A549 (cell line): ENCODE measurements at regions of chr19 and their contacts with region 1.

Region 1: DNA sequence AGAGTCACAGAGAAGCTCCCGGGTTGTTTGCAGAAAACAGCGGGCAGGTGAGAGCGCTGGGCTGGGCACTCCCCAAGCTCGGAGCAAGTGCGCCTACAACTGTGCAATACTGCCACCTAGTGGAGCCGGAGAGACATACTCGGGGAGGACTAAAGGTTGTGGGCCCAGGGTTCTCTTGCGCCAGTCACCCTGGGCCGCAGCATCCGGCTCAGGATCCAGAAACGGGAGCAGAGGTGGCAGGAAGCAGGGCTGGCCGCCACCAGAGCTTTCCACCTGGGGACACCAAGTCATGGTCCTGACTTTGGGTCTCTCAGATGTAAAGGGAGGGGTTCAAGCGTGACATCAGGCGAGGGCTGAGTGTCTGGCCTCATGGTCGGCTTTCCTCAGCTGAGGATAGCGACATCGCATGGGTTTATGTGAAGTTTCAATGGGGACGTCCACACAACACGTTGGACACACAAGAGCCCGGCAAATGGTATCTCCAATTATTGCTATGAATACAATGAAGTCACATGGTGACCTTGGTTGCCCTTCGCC is 11.2 kb upstream of the KLK4 start:
- DNase-seq: peak; percentile 89 to 91
- ATAC-seq: peak; percentile 97 to 100
- H3K4me3 ChIP-seq: no peak overlapping the region
- H3K27ac ChIP-seq: no peak overlapping the region
- H3K4me1 ChIP-seq: peaks cover 14% of the 10 kb centered on the region; the same call in 1 of the 3 replicates
- CTCF ChIP-seq: peak; percentile 96
- EP300 ChIP-seq: no peak
- POLR2A ChIP-seq: no peak
- RAD21 ChIP-seq: peak; percentile 95 to 97

Region 2: DNA sequence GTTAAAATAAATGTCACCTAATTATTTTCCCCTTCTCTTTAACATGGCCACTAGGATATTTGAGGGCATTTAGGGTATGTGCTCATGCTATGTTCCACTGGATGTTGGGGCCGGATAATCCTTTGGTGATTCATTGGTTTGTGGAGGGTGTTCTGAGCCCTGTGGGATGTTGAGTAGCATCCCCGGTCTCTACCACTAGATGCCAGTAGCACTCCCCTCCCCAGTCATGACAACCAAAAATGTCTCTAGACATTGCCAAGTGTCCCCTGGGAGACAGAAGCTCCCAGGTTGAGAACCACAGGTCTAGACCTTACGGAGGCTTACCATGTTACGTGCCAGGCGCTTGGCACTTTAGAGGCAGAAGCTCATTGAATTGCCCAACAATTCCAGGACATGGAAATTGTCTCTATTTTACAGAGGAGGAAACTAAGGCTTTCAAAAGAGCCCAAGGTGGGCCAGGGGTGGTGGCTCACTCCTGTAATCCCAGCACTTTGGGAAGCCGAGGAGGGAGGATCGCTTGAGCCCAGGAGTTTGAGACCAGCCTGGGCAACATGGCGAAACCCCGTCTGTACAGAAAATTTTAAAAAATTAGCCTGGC is 216.9 kb before region 1 on chr19:
- CTCF ChIA-PET with region 1: interaction called, 26 read pairs
- POLR2A ChIA-PET with region 1: no interaction called
- DNase-seq: peak; percentile 79 to 95
- ATAC-seq: peak; percentile 84 to 88
- H3K4me3 ChIP-seq: no peak overlapping the region
- H3K27ac ChIP-seq: no peak overlapping the region
- H3K4me1 ChIP-seq: peaks cover 13% of the 10 kb centered on the region; the same call in 1 of the 3 replicates
- CTCF ChIP-seq: peak; percentile 80
- EP300 ChIP-seq: no peak
- POLR2A ChIP-seq: no peak
- RAD21 ChIP-seq: peak; percentile 73 to 76

Region 3: DNA sequence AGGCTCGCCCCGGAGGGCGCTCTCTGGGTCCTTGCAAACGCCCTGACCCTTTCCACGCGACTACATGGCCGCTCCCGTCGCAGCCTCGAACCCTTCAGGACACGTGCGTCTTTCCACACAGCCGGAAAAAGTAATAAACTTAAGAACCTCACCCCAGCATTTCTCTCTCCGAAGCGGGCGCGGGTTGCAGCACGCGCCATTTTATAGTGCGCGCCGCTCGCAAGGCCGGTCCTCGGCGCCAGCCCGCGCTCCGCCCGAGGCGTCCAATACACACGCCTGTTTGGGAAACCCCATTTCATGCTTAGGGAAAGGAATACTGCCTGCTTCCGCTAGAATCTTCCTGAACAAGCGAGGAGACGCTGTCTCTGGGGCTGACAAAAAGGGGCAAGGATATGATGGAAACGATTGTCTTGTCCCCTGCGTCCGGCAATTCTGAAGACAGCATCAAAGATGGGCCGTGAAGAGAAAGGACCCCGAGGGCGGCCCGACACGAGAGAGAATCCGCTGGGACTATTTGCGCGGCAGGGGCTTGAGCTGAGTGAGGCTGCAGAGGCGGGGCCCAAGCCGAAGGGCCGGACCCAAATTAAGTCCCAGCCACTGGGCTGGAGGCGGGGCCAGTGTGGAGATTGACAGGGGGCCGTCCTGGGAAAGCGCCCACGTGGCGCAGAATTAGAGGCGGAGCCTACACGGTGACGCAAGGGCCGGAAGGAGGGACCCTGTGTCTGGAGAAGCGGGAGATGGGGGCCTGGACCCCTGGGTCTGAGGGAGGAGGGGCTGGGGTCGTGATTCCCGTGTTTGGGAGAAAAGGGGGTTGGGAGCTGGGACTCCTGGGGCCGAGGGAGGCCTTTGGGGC is 117.7 kb before region 1 on chr19:
- CTCF ChIA-PET with region 1: interaction called, 20 read pairs
- POLR2A ChIA-PET with region 1: interaction called, 14 read pairs
- DNase-seq: peak; percentile 98 to 100
- ATAC-seq: peak; percentile 89 to 95
- H3K4me3 ChIP-seq: peak overlapping the region; percentile 65
- H3K27ac ChIP-seq: peak overlapping the region; percentile 94 to 95
- H3K4me1 ChIP-seq: peaks cover 15% of the 10 kb centered on the region
- CTCF ChIP-seq: no peak
- EP300 ChIP-seq: no peak
- POLR2A ChIP-seq: peak; percentile 97
- RAD21 ChIP-seq: no peak

Region 4: DNA sequence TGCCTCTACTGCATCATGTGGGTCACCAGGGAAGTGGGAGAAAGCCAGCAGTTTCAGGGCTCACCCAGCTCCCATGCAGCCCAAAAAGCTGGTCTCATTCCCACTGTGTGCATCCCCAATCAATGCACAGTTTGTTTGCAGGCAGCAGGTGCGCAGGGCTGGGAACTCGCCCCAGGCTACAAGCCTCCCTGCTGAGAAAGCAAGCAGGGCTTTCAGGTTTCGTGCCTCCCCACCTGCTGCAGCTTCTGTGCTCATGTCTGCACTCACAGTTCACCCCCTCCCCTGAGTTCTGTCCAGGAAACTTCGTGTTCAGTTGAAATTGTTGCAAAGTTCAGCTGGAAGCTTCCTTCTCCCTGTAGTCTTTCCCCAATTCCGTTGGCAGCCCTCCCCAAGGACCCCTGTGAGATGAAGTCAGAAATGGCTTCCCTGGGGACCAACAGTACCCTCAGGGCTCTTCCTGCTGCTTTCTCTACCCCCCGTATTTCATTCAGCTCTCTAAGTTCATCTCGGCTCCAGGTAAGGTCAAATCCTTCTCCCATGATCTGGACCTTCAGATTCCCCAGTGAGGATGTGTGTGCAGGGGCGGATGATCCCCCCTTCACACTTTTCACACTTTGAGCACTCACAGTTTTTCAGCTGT is 78.0 kb before region 1 on chr19:
- CTCF ChIA-PET with region 1: interaction called, 39 read pairs
- POLR2A ChIA-PET with region 1: no interaction called
- DNase-seq: no peak
- ATAC-seq: no peak
- H3K4me3 ChIP-seq: no peak overlapping the region
- H3K27ac ChIP-seq: no peak overlapping the region
- H3K4me1 ChIP-seq: no peaks in the 10 kb centered on the region
- CTCF ChIP-seq: no peak
- EP300 ChIP-seq: no peak
- POLR2A ChIP-seq: no peak
- RAD21 ChIP-seq: no peak

Region 5: DNA sequence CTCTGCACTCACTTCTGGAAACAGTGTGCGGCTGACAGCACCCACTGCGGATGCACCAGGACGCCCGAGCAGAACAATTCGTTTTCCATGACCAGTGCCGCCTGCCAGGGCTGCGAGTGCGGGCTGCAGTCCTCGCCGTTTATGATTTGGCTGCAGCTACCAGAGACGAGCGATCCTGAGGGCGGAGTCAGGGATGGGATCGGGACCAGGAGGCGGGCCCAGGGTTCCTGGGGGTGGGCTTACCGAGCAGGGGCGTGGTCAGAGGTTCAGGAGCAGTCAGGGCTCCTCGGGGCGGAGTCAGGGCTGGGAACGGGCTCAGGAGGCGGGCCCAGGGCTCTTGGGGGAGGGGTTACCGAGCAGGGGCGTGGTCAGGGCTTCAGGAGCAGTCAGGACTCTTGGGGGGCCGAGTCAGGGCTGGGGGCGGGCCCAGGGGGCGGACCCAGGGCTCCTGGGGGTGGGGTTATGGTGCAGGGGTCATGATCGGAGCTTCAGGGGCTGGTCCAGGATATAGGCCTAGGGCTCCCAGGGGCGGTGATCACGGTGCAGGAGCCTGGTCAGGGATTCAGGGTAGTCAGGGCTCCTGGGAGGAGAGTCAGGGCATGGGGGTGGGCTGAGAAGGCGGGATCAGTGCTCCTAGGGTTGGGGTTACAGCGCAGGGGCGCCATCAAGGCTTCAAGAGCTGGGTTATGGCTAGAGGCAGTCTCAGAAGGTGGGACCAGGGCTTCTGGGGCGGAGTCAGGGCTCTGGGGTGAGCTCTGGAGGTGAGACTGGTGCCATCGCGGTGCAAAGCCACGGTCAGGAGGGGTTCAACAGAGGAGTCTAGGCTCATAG is 12.9 kb before region 1 on chr19:
- CTCF ChIA-PET with region 1: interaction called, 56 read pairs
- POLR2A ChIA-PET with region 1: no interaction called
- DNase-seq: peak; percentile 82 to 86
- ATAC-seq: peak; percentile 52 to 90
- H3K4me3 ChIP-seq: peak overlapping the region; percentile 41
- H3K27ac ChIP-seq: peak overlapping the region in 1 of 2 experiments; percentile 26; a peak in 3 of 6 replicates
- H3K4me1 ChIP-seq: peaks cover 10% of the 10 kb centered on the region; the same call in 1 of the 3 replicates
- CTCF ChIP-seq: no peak
- EP300 ChIP-seq: no peak
- POLR2A ChIP-seq: no peak
- RAD21 ChIP-seq: no peak

Region 6: GRCh38 chr19:51016798-51017683 is 94.7 kb after region 1 on chr19:
- CTCF ChIA-PET with region 1: interaction called, 30 read pairs
- POLR2A ChIA-PET with region 1: no interaction called
- DNase-seq: peak; percentile 87 to 98
- ATAC-seq: peak; percentile 63 to 84
- H3K4me3 ChIP-seq: peak overlapping the region; percentile 42
- H3K27ac ChIP-seq: peak overlapping the region in 1 of 2 experiments; percentile 27; a peak in 1 of 6 replicates
- H3K4me1 ChIP-seq: peaks cover 23% of the 10 kb centered on the region
- CTCF ChIP-seq: peak; percentile 84
- EP300 ChIP-seq: no peak
- POLR2A ChIP-seq: no peak
- RAD21 ChIP-seq: peak; percentile 84 to 89

Region 7: GRCh38 chr19:51036519-51036918 is 114.1 kb after region 1 on chr19:
- CTCF ChIA-PET with region 1: no interaction called
- POLR2A ChIA-PET with region 1: no interaction called
- DNase-seq: no peak
- ATAC-seq: peak in 1 of 2 experiments; percentile 57; a peak in 3 of 6 replicates
- H3K4me3 ChIP-seq: no peak overlapping the region
- H3K27ac ChIP-seq: no peak overlapping the region
- H3K4me1 ChIP-seq: no peaks in the 10 kb centered on the region
- CTCF ChIP-seq: no peak
- EP300 ChIP-seq: no peak
- POLR2A ChIP-seq: no peak
- RAD21 ChIP-seq: no peak